Activated CD4-positive, alpha-beta memory T cell treated with anti-CD3 and anti-CD28 coated beads for 36 hours (primary cell): ENCODE measurements at regions of chr2 and their contacts with region 1.

Region 1: DNA sequence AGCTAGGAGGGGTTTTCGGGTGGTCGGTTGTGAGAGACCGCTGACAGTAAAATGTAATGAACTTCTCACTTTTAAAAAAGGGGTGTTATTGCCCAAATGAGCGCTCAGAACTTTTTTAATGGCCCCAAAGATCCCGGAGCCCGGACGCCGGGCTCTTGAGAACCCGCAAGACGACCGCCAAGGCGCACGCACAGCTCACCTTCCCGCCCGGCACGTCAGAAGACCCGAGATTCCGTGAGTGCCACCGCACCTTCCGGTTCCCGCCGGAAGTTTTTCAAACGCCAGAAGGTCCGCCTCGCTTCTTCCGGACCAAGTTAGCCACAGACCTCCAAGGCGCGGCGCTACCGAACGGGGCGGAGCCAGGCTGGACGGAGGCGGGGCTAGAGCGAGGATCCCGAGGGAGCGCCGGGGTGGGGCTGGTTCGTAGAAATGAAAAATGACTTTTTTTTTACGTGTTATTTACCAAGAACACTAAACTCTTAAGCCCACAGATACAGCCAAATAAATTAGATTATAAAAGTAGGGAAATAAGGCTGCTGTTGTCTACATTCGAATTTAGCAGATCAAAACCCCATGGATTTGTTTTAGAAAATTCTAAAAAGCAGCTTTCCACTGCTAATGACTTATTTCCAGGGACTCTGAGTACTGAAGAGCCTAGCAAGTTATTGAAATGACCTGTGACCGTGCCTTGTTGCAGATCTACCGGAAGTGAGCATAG is at the start of gene SRBD1:
- DNase-seq: peak; percentile 96
- H3K4me3 Mint-ChIP-seq: peak within 1 kb of the TSS; percentile 95
- H3K27ac Mint-ChIP-seq: peak within 1 kb of the TSS; percentile 94
- H3K4me1 Mint-ChIP-seq: peaks cover 18% of the 10 kb centered on the region
- H3K27me3 Mint-ChIP-seq: no peaks in the 10 kb centered on the region
- total RNA-seq, gene SRBD1: 19.3 to 20.5 TPM

Region 2: DNA sequence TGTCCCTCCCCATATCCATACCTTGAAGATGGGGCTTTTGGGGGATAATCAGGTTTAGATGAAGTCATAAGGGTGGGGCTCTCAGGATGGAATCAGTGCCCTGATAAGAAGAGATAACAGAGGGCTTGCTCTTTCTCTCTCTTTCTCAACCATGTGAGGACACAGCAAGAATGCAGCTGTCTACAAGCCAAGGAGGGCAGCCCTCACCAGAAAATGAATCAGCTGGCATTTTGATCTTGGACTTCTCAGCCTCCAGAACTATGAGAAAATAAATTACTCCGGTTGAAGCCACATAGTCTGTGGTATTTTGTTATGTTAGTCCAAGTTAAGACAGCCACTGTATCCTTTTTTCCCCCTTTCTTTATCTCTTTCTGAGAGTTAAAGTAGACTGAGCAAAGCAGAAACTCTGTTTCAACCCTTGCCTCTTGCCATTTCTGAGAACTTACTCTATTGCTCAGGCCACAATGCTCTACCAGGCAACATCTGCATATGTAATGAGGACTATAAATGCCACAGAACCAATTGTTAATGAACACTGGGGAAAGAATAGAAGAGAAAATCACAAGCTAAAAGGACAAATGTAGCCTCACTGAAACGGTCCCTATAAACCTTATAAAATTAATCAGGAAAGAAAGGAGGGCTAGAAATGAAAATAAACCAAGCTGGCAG is 57.0 kb before region 1 on chr2:
- CTCF ChIA-PET with region 1: interaction called, 6 read pairs
- POLR2A ChIA-PET with region 1: no interaction called
- intact Hi-C with region 1: loop called (anchors 2 kb)
- DNase-seq: peak; percentile 16
- H3K4me3 Mint-ChIP-seq: peak overlapping the region; percentile 12
- H3K27ac Mint-ChIP-seq: peak overlapping the region; percentile 77
- H3K4me1 Mint-ChIP-seq: peaks cover 28% of the 10 kb centered on the region
- H3K27me3 Mint-ChIP-seq: no peaks in the 10 kb centered on the region

Region 3: DNA sequence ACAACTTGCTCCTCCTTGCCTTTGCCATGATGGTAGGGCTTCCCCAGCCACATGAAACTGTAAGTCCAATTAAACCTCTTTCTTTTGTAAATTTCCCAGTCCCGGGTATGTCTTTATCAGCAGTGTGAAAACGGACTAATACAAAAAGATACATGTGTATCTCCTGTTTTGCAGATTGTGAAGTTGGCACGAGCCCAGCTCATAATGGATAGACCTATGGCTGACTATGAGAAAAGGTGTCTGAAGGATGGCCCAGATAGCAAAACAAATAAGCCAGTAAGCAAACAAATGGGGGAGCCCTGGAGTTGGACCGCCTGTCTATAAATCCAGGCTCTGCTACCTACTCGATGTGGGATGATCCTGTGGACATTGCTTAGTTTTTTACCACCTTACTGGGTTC is 24.8 kb after region 1 on chr2:
- CTCF ChIA-PET with region 1: no interaction called
- POLR2A ChIA-PET with region 1: no interaction called
- intact Hi-C with region 1: no loop called
- DNase-seq: no peak
- H3K4me3 Mint-ChIP-seq: no peak overlapping the region
- H3K27ac Mint-ChIP-seq: no peak overlapping the region
- H3K4me1 Mint-ChIP-seq: peaks cover 4% of the 10 kb centered on the region
- H3K27me3 Mint-ChIP-seq: peaks cover 25% of the 10 kb centered on the region

Region 4: DNA sequence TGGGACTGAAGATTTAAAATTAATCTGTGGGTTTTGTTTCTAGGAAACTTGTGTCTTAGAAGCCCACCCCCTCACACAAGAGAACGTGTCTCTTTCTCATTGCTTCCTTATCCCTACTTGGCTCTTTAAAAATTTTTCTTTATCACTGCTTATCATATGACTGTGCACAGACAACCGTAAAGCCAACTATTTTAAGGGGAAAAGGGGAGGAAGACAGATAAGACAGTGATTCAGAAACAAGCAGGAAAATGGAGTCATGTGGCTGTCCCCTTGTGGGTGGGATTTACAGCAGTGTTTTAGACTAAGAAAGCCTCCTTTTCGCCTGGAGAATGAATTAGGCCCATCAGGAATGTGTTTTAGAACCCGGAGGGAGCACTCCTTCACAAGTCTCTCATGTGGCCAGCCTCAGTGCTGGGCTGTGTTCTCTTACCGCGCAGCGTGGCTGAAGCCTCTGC is 57.9 kb after region 1 on chr2:
- CTCF ChIA-PET with region 1: no interaction called
- POLR2A ChIA-PET with region 1: no interaction called
- intact Hi-C with region 1: no loop called
- DNase-seq: no peak
- H3K4me3 Mint-ChIP-seq: no peak overlapping the region
- H3K27ac Mint-ChIP-seq: no peak overlapping the region
- H3K4me1 Mint-ChIP-seq: peaks cover 10% of the 10 kb centered on the region
- H3K27me3 Mint-ChIP-seq: no peaks in the 10 kb centered on the region